Right ventricle myocardium superior (tissue), 1 donor: ENCODE measurements at regions of chr7 and their contacts with region 1.

Region 1: DNA sequence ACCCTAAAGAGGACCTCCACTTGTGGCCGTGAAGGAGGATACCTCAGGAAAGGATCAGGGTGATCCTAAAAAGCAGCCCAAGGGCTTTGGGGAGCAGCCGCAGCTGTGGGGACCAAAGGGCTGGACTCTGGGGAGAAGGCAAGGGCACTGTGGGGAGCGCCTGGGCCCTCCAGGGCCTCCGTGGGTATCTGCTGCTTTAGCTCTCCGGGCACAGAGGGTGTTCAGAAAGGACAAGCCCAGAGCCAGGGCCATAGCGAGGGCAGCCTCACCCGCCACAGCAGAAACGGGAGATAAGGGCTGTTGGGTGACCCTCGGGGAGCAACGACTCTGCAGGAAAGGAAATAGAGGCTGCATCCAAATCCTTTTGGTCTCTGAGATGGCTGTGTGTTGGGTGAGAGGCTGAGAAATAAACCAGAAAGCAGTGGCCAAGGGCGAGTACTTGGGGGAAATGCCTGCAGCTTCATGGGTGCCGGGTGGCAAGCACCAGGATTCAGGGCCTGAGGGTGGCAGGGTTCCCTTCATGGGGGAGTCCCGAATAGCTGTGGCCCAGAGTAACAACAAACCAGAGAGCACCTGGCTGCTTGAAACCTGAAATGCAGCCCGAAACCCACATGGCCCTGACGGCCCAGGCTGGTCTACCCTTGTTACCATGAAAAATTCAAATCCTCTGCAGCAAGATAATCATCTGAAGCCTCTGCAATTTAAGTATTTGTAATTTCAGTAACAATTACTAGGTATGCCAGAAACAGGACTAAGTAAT is 95.2 kb downstream of the VIPR2 start:
- DNase-seq: no peak
- ATAC-seq: no peak

Region 2: GRCh38 chr7:158863611-158864506 is 185.6 kb before region 1 on chr7:
- intact Hi-C with region 1: no loop called
- DNase-seq: peak; percentile 90
- ATAC-seq: peak; percentile 86

Region 3: GRCh38 chr7:159143780-159144757 is 94.6 kb after region 1 on chr7:
- intact Hi-C with region 1: loop called (anchors 10 kb)
- DNase-seq: peak; percentile 72
- ATAC-seq: peak; percentile 70